HAP-1 (cell line): ENCODE measurements at regions of chr2 and their contacts with region 1.

Region 1: GRCh38 chr2:118003396-118003824 is 10.5 kb downstream of the CCDC93 start:
- DNase-seq: peak; percentile 68 to 70
- H3K4me3 ChIP-seq: no peak overlapping the region
- H3K4me1 ChIP-seq: peaks cover 2% of the 10 kb centered on the region; the same call in 1 of the 2 replicates
- H3K27me3 ChIP-seq: no peaks in the 10 kb centered on the region

Region 2: GRCh38 chr2:117835990-117836760 is 167.2 kb before region 1 on chr2:
- in situ Hi-C with region 1: loop called (anchors 10 kb)
- DNase-seq: peak; percentile 34 to 74
- H3K4me3 ChIP-seq: no peak overlapping the region
- H3K4me1 ChIP-seq: 0 out of 2 replicates have a peak, but pooled peaks cover 3% of the 10 kb centered on the region
- H3K27me3 ChIP-seq: no peaks in the 10 kb centered on the region